Right ventricle myocardium superior (tissue), 1 donor: ENCODE measurements at regions of chr10 and their contacts with region 1.

Region 1: DNA sequence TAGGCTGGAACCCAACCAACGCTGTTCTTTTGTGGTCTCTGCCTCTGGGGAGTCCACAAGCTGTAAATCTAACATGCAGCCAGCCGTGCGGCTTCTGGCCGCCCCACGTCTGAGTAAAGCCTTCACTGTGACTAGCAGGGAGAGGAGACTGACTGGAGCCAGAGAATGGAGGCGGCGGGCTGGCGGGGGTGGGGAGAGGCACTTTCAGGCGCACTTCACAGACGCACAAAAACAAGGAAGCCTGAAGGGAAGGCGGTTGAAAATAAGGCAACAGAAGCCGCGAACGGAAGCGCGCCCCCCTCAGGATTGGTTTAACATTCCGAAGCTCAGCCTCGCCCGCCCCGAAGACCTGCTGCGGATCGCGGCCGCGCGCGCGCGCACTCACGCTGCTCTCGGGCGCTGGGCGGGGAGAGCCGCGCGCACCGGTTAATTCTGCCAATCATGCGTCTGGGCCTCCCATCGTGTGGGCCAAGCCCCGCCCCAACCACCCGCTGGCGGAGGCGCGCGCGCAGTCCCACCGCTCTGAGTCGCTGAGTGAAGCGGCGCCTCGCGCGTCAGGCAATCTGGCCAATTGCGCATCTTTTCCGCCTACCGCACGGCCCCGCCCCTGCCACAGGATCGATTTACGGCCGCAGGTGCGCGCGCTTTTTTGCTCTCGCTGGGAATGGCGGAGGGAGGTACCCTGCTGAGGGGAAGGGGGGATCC is at the start of gene SFR1:
- DNase-seq: peak; percentile 100
- ATAC-seq: peak; percentile 97
- total RNA-seq, gene SFR1: 4.9 TPM

Region 2: GRCh38 chr10:103833731-103834365 is 287.8 kb before region 1 on chr10:
- intact Hi-C with region 1: no loop called
- DNase-seq: peak; percentile 66
- ATAC-seq: peak; percentile 66

Region 3: DNA sequence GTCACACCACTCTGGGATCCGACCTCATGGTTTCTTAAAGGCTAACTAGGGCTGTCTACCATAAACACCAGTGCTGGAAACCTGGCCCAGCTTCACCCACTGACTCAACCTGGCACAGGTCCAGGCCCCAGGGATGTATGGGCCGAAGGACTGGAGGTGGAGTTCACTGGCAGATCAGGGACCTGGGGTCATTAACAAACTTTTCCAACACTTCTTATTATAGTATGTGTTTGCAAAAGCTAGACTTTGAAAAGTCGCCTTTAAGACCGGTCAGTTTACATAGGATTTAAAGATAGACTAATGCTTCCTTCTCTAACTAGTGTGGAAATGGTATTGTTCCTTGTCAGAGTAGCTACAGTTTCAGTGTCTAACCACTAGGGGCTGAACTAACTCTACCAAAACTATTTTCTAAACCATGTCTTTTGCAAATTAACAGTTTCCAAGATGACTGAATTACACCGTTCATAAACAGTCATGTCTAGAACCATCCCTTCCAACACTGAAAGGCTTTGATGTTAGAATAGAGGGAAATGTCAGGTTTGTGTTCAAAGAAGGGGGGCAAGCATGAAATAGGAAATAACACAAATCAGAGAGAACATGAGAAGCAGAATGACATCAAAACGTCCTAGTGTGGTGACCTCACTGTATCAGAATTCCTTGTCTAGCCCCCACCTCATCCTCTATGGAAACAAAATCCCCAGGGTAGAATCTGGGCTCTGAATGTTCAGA is 233.4 kb before region 1 on chr10:
- intact Hi-C with region 1: loop called (anchors 10 kb)
- DNase-seq: peak; percentile 69
- ATAC-seq: peak; percentile 64

Region 4: GRCh38 chr10:103966671-103967447 is 154.8 kb before region 1 on chr10 and contains the start of gene SLK:
- intact Hi-C with region 1: loop called (anchors 10 kb)
- DNase-seq: peak; percentile 91
- ATAC-seq: peak; percentile 98
- total RNA-seq, gene SLK: 28.1 TPM

Region 5: DNA sequence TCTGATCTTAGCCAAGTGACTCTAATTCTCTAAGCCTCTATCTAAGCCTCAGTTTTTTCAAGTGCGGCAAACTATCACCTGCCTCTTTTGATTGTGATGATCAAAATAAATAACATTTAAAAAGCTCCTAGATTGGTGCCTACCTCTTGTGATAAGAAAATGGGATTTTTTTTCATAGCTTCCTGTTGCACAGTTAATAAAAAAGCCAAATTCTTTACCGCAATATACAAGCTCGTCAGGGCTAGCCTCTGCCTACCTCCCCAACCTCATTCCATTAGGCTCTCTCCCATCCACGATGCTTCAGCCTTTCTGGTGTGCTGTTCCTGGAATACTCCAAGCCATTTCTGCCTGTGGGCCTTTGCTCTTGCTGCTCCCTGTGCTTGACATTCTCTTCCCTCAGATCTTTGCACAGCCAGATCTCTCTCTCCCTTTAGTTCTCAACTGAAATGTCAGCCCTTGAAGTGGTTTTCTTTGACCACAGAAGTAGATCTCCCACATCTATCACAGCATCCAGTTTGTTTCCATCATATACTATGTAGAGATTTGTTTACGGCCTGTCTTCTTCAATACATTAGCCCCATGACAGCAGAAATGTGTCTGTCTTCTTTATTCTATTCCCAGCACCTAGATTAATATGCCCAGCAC is 49.1 kb after region 1 on chr10:
- intact Hi-C with region 1: no loop called
- DNase-seq: no peak
- ATAC-seq: no peak